B cell (primary cell): ENCODE measurements at regions of chr10 and their contacts with region 1.

Region 1: GRCh38 chr10:79068562-79069324 is at the start of gene ZMIZ1:
- DNase-seq: peak; percentile 87
- ATAC-seq: peak; percentile 58
- H3K4me3 ChIP-seq: peak within 1 kb of the TSS; percentile 61 to 94 (median 67)
- H3K4me3 Mint-ChIP-seq: peak within 1 kb of the TSS; percentile 97
- H3K27ac ChIP-seq: no peak within 1 kb of the TSS
- H3K27ac Mint-ChIP-seq: peak within 1 kb of the TSS; percentile 74
- H3K4me1 ChIP-seq: peaks cover 18 to 35% of the 10 kb centered on the region in 2 donors
- H3K4me1 Mint-ChIP-seq: peaks cover 37% of the 10 kb centered on the region
- H3K27me3 ChIP-seq: peaks cover 0 to 30% (median 25%) of the 10 kb centered on the region in 4 experiments
- H3K27me3 Mint-ChIP-seq: peaks cover 28% of the 10 kb centered on the region
- CTCF ChIP-seq: peak; percentile 2
- total RNA-seq, gene ZMIZ1: 59.6 and 64.9 TPM in 2 replicates

Region 2: GRCh38 chr10:78029269-78030226 is 1039.2 kb before region 1 on chr10 and contains the start of gene POLR3A:
- CTCF ChIA-PET with region 1: no interaction called
- POLR2A ChIA-PET with region 1: interaction called, 11 read pairs
- intact Hi-C with region 1: loop called (anchors 2 kb)
- DNase-seq: peak; percentile 96
- ATAC-seq: peak; percentile 60
- H3K4me3 ChIP-seq: peak within 1 kb of the TSS; percentile 78 to 100 (median 96)
- H3K4me3 Mint-ChIP-seq: peak within 1 kb of the TSS; percentile 99
- H3K27ac ChIP-seq: peak within 1 kb of the TSS; percentile 43 to 81
- H3K27ac Mint-ChIP-seq: peak within 1 kb of the TSS; percentile 89
- H3K4me1 ChIP-seq: peaks cover 18 to 28% of the 10 kb centered on the region in 2 donors
- H3K4me1 Mint-ChIP-seq: peaks cover 37% of the 10 kb centered on the region
- H3K27me3 ChIP-seq: no peaks in the 10 kb centered on the region
- H3K27me3 Mint-ChIP-seq: no peaks in the 10 kb centered on the region
- CTCF ChIP-seq: peak; percentile 64
- total RNA-seq, gene POLR3A: 18.3 and 18.4 TPM in 2 replicates

Region 3: GRCh38 chr10:78972947-78973900 is 95.5 kb before region 1 on chr10:
- CTCF ChIA-PET with region 1: no interaction called
- POLR2A ChIA-PET with region 1: no interaction called
- intact Hi-C with region 1: loop called (anchors 5 kb)
- DNase-seq: peak; percentile 48
- ATAC-seq: peak; percentile 67
- H3K4me3 ChIP-seq: peak overlapping the region in 3 of 5 experiments; percentile 32 to 55 (median 42)
- H3K4me3 Mint-ChIP-seq: peak overlapping the region; percentile 84
- H3K27ac ChIP-seq: no peak overlapping the region
- H3K27ac Mint-ChIP-seq: no peak overlapping the region
- H3K4me1 ChIP-seq: peaks cover 13 to 14% of the 10 kb centered on the region in 2 donors
- H3K4me1 Mint-ChIP-seq: peaks cover 14% of the 10 kb centered on the region
- H3K27me3 ChIP-seq: peaks cover 0 to 49% (median 15%) of the 10 kb centered on the region in 4 experiments
- H3K27me3 Mint-ChIP-seq: peaks cover 54% of the 10 kb centered on the region
- CTCF ChIP-seq: no peak

Region 4: DNA sequence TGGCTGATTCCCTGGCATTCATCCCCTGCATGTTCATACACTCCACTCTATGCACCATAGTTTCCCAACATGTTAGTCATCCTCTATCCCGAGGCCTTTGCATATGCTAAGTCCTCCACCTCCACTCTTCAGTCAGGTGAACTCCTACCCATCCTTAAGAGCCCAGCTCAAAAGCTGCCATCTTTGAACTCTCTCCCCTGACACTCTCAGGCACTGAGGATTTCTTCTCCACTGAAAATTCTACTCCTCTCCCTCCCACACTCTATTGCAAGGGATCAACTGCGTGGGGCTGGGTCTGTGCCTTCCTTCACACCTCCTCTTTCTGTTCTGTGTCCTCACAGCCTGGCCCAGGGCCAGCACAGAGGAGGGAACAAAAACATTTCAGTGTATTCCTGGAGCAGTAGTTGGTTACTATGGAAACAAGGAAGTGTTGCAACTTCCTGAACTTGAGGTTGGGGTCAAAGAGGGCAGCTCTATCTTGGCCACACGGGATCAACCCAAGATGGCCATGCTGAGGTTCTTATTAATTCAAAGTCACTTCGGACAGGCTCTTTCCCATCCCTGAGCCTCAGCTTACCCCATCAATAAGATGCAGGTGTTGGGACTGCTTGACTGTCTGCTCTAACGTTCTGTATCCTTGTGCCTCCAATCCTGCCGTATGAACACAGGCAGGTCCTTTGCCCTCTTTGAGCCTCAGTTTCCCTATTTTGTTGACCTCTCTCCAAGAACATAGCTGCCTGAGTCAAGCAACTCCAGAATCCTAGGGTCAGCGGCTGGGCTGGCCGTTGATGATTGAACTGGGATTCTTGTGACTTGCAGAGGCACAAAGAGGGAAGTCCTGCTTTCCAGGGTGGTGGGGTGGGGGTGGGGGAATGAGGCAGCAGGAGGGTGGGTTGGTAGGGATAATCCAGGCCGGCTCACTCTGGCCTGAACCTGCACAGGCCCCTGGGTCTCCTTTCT is 15.5 kb after region 1 on chr10:
- CTCF ChIA-PET with region 1: no interaction called
- POLR2A ChIA-PET with region 1: interaction called, 3 read pairs
- intact Hi-C with region 1: loop called (anchors 2 kb)
- DNase-seq: peak; percentile 62
- ATAC-seq: peak; percentile 11
- H3K4me3 ChIP-seq: peak overlapping the region in 2 of 5 experiments; percentile 8 to 38
- H3K4me3 Mint-ChIP-seq: peak overlapping the region; percentile 87
- H3K27ac ChIP-seq: no peak overlapping the region
- H3K27ac Mint-ChIP-seq: peak overlapping the region; percentile 64
- H3K4me1 ChIP-seq: peaks cover 35 to 50% of the 10 kb centered on the region in 2 donors
- H3K4me1 Mint-ChIP-seq: peaks cover 44% of the 10 kb centered on the region
- H3K27me3 ChIP-seq: peaks cover 0 to 34% (median 12%) of the 10 kb centered on the region in 4 experiments
- H3K27me3 Mint-ChIP-seq: peaks cover 37% of the 10 kb centered on the region
- CTCF ChIP-seq: no peak

Region 5: GRCh38 chr10:79347226-79347893 is 278.6 kb after region 1 on chr10 and contains the start of gene PPIF:
- CTCF ChIA-PET with region 1: no interaction called
- POLR2A ChIA-PET with region 1: interaction called, 3 read pairs
- intact Hi-C with region 1: loop called (anchors 5 kb)
- DNase-seq: peak; percentile 95
- ATAC-seq: peak; percentile 97
- H3K4me3 ChIP-seq: peak within 1 kb of the TSS; percentile 9 to 89 (median 69)
- H3K4me3 Mint-ChIP-seq: peak within 1 kb of the TSS; percentile 88
- H3K27ac ChIP-seq: peak within 1 kb of the TSS; percentile 84 to 92
- H3K27ac Mint-ChIP-seq: peak within 1 kb of the TSS; percentile 93
- H3K4me1 ChIP-seq: peaks cover 14 to 26% of the 10 kb centered on the region in 2 donors
- H3K4me1 Mint-ChIP-seq: peaks cover 27% of the 10 kb centered on the region
- H3K27me3 ChIP-seq: no peaks in the 10 kb centered on the region
- H3K27me3 Mint-ChIP-seq: no peaks in the 10 kb centered on the region
- CTCF ChIP-seq: peak; percentile 90
- total RNA-seq, gene PPIF: 50.4 and 50.7 TPM in 2 replicates

Region 6: DNA sequence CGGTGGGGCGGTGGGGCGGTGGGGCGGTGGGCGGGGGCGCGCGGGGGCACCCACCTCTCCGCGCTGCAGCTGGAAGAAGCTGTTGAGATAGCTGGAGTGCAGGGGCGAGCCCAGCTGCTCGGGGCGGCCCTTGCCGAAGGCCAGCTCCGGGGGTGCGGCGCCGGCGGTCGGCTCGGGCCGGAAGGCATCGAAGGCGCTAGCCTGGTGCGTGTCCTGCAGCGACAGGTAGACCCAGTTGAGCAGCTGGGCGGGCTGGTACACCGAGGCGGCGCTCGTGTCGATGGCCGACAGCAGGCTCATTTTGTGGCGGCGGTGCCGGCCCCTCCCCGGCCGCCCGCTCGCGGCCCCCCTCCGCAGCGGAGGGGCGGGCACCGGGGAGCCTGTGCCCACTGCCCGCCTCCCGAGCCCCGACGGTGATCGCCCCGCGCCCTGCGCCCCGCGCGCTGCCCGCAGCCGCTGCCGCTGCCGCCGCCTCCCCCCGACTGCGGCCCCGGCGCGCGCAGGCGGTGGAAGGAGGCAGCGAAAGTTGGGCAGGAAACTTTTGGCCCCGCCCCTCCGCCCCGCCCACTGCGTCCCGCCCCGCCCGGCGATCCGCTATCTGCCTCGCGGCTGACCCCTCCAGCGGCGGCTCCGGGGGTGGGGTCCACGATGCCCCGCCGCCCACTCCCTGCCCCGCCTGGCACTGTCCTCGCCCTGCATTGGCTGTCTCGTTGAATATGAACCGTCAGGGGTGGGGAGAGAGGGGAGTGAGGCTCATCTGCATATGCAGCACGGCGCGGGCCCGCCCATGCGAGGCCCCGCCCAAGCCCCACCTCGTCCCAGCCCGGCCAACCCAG is 376.6 kb after region 1 on chr10 and contains the start of gene ZCCHC24:
- CTCF ChIA-PET with region 1: no interaction called
- POLR2A ChIA-PET with region 1: interaction called, 5 read pairs
- intact Hi-C with region 1: loop called (anchors 1 kb)
- DNase-seq: peak; percentile 97
- ATAC-seq: peak; percentile 91
- H3K4me3 ChIP-seq: peak within 1 kb of the TSS; percentile 44 to 73 (median 65)
- H3K4me3 Mint-ChIP-seq: peak within 1 kb of the TSS; percentile 94
- H3K27ac ChIP-seq: no peak within 1 kb of the TSS
- H3K27ac Mint-ChIP-seq: peak within 1 kb of the TSS; percentile 86
- H3K4me1 ChIP-seq: peaks cover 18 to 29% of the 10 kb centered on the region in 2 donors
- H3K4me1 Mint-ChIP-seq: peaks cover 26% of the 10 kb centered on the region
- H3K27me3 ChIP-seq: peaks cover 0 to 12% (median 5%) of the 10 kb centered on the region in 4 experiments
- H3K27me3 Mint-ChIP-seq: no peaks in the 10 kb centered on the region
- CTCF ChIP-seq: no peak
- total RNA-seq, gene ZCCHC24: 2.1 and 2.3 TPM in 2 replicates